Activated CD8-positive, alpha-beta T cell treated with anti-CD3 and anti-CD28 coated beads, Interleukin-2, amount 10 ng/mL, durations not matched to agents 7 days and 5 days (primary cell): ENCODE measurements at regions of chr1 and their contacts with region 1.

Region 1: GRCh38 chr1:206912445-206913095 is 9.2 kb downstream of the FCMR start:
- DNase-seq: peak; percentile 80
- ATAC-seq: peak; percentile 64
- H3K4me3 Mint-ChIP-seq: no peak overlapping the region
- H3K27ac Mint-ChIP-seq: no peak overlapping the region
- H3K4me1 Mint-ChIP-seq: peaks cover 65% of the 10 kb centered on the region
- H3K27me3 Mint-ChIP-seq: no peaks in the 10 kb centered on the region

Region 2: DNA sequence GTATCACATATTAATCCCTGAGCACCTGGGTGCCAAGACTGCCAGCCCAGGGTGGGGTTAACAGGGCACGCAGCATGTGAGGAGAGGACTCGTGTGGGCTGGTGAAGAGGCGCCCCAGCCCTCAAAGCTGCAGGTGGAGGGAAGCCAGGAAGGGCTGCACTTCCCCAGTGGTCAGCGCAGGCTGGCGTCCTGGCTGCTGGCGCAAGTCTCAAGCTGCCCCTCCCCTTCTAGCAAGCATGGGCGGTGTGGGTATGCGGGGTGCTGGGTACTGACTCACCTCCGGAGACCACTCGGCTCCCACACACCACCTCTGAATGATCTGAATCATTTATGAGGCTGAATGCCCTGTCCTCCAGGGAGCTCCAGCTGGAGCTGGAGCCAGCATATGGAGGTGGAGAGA is 344.3 kb before region 1 on chr1:
- CTCF ChIA-PET with region 1: no interaction called
- POLR2A ChIA-PET with region 1: no interaction called
- DNase-seq: no peak
- ATAC-seq: peak; percentile 17
- H3K4me3 Mint-ChIP-seq: peak overlapping the region; percentile 62
- H3K27ac Mint-ChIP-seq: peak overlapping the region; percentile 90
- H3K4me1 Mint-ChIP-seq: peaks cover 100% of the 10 kb centered on the region
- H3K27me3 Mint-ChIP-seq: no peaks in the 10 kb centered on the region

Region 3: GRCh38 chr1:206635080-206635977 is 277.2 kb before region 1 on chr1 and contains the start of gene DYRK3:
- CTCF ChIA-PET with region 1: interaction called, 20 read pairs
- POLR2A ChIA-PET with region 1: no interaction called
- DNase-seq: peak; percentile 95
- ATAC-seq: peak; percentile 95
- H3K4me3 Mint-ChIP-seq: peak within 1 kb of the TSS; percentile 80
- H3K27ac Mint-ChIP-seq: peak within 1 kb of the TSS; percentile 83
- H3K4me1 Mint-ChIP-seq: peaks cover 27% of the 10 kb centered on the region
- H3K27me3 Mint-ChIP-seq: peaks cover 17% of the 10 kb centered on the region
- total RNA-seq, gene DYRK3: 5.3 to 5.9 TPM

Region 4: GRCh38 chr1:206725109-206725963 is 187.2 kb before region 1 on chr1:
- CTCF ChIA-PET with region 1: interaction called, 75 read pairs
- POLR2A ChIA-PET with region 1: no interaction called
- DNase-seq: peak; percentile 81
- ATAC-seq: peak; percentile 66
- H3K4me3 Mint-ChIP-seq: no peak overlapping the region
- H3K27ac Mint-ChIP-seq: no peak overlapping the region
- H3K4me1 Mint-ChIP-seq: peaks cover 60% of the 10 kb centered on the region
- H3K27me3 Mint-ChIP-seq: no peaks in the 10 kb centered on the region

Region 5: GRCh38 chr1:206803221-206803730 is 109.3 kb before region 1 on chr1:
- CTCF ChIA-PET with region 1: interaction called, 185 read pairs
- POLR2A ChIA-PET with region 1: interaction called, 5 read pairs
- DNase-seq: peak; percentile 91
- ATAC-seq: peak; percentile 98
- H3K4me3 Mint-ChIP-seq: peak overlapping the region; percentile 1
- H3K27ac Mint-ChIP-seq: peak overlapping the region; percentile 83
- H3K4me1 Mint-ChIP-seq: peaks cover 70% of the 10 kb centered on the region
- H3K27me3 Mint-ChIP-seq: peaks cover 24% of the 10 kb centered on the region

Region 6: DNA sequence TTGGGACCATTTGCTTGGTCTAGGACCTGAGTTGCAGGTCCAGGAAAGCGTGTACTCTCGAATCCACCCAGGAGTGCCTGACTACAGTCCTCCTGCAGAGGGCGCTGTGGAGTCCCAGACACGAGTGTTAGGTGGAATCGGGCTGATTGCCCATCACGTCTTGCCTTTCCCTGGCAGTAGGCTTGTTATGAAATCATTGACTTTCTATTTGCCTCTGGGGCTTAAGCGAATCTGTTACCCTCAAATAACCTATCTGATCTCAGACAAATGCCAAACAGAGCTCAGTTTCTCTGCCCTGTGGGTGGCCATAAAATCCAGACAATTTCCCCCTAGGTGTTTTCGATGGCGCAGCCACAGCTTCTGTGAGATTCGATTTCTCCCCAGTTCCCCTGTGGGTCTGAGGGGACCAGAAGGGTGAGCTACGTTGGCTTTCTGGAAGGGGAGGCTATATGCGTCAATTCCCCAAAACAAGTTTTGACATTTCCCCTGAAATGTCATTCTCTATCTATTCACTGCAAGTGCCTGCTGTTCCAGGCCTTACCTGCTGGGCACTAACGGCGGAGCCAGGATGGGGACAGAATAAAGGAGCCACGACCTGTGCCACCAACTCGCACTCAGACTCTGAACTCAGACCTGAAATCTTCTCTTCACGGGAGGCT is 47.4 kb before region 1 on chr1 and contains the start of gene IL20:
- CTCF ChIA-PET with region 1: interaction called, 43 read pairs
- POLR2A ChIA-PET with region 1: interaction called, 6 read pairs
- DNase-seq: peak; percentile 85
- ATAC-seq: peak; percentile 82
- H3K4me3 Mint-ChIP-seq: no peak within 1 kb of the TSS
- H3K27ac Mint-ChIP-seq: no peak within 1 kb of the TSS
- H3K4me1 Mint-ChIP-seq: peaks cover 6% of the 10 kb centered on the region
- H3K27me3 Mint-ChIP-seq: peaks cover 42% of the 10 kb centered on the region
- total RNA-seq, gene IL20: not detected

Region 7: DNA sequence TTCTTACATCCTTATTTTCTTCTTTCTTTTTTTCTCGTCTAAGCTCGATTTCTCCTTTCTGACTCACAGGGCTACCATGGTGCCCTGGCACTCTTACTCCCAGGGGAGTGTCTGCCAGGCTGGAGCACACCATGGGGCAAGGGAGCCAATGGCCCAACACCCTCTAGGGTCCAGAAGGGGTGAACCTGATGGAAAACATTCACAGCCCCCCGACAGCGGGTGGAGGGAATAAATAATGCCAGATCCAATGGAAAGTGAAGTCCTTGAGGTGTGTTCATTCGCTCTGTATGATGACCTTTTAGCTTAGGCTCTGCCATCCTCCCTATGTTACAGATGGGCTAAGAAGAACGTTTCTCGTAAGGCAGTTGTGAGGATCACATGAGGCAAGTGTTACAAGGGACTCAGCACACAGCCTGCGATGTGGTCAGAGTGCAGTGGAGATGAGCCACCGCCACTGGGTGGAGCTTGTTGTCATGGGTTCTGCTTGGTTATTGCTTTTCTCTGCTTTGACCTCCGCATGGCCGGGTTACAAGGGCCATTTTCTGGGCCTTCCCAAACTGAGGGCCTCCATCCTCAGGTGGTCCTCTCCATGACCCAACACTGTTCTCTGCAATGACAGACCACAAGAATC is 12.7 kb after region 1 on chr1:
- CTCF ChIA-PET with region 1: interaction called, 92 read pairs
- POLR2A ChIA-PET with region 1: interaction called, 8 read pairs
- DNase-seq: peak; percentile 86
- ATAC-seq: peak; percentile 72
- H3K4me3 Mint-ChIP-seq: no peak overlapping the region
- H3K27ac Mint-ChIP-seq: no peak overlapping the region
- H3K4me1 Mint-ChIP-seq: peaks cover 29% of the 10 kb centered on the region
- H3K27me3 Mint-ChIP-seq: no peaks in the 10 kb centered on the region

Region 8: GRCh38 chr1:207001492-207002245 is 89.1 kb after region 1 on chr1:
- CTCF ChIA-PET with region 1: no interaction called
- POLR2A ChIA-PET with region 1: no interaction called
- DNase-seq: no peak
- ATAC-seq: no peak
- H3K4me3 Mint-ChIP-seq: no peak overlapping the region
- H3K27ac Mint-ChIP-seq: no peak overlapping the region
- H3K4me1 Mint-ChIP-seq: no peaks in the 10 kb centered on the region
- H3K27me3 Mint-ChIP-seq: peaks cover 32% of the 10 kb centered on the region

Region 9: DNA sequence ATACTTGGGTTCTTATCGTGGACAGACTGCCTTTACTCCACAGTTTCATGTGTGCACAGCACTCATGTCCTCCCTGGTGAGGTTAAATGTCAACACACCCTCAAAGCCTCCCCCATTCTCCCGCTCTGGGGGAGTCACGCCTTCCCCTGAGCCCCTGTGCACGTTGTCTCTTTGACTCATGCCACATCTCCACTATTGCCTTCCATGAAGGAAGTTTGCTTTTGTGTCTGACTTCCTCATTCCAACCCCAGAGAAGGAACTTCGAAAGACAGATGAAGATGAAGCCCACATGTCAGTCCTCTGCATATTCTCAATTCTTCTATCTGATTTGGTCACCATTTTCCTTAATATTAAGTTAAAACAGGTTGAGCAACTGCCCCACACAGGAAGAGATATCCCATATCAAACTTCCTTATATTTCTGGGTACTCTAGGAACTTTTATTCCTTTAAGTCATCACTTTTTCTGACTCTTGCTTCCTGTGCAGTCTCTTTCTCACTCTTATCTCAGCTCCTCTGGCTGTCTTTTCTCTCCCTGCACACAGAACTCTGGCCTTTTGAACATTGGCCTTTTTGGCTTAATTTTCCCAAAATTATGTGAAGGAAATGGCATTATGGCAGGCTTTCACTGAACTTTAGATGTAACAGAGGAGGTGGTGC is 233.0 kb after region 1 on chr1:
- CTCF ChIA-PET with region 1: no interaction called
- POLR2A ChIA-PET with region 1: no interaction called
- DNase-seq: no peak
- ATAC-seq: no peak
- H3K4me3 Mint-ChIP-seq: no peak overlapping the region
- H3K27ac Mint-ChIP-seq: no peak overlapping the region
- H3K4me1 Mint-ChIP-seq: no peaks in the 10 kb centered on the region
- H3K27me3 Mint-ChIP-seq: peaks cover 3% of the 10 kb centered on the region